Dendritic cell treated with granulocyte-macrophage colony-stimulating factor and Interleukin-4, amounts not matched to agents 40 ng/mL and 50 ng/mL, for 4 days (primary cell): ENCODE measurements at regions of chr6 and their contacts with region 1.

Region 1: DNA sequence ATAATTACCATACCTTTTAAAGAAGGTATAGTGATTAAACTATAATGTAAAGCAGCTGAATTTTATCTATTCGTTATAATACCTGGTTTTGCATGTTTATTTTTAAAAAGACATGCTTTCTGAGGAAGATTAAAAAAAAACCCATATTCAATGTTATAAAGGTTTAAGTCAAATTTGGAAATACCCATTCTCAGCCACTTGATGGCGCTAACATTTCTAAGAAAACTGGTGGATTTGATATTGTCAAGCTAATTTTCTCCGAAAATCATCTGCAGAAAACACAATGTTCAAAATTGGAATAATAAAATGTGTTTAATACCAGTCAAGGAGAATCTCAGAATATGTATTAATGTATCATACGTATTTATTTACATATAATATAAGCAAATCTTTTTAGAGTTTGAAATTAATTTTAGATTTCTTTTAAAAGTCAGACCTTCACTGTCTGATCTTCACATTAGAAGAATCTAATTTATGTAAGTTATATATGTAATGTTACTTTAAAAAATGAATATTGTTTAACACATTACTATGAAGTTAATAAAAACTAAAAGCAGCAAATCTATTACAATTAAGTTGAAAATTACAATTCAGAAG is 35.0 kb downstream of the SHPRH start:
- H3K4me3 Mint-ChIP-seq: no peak overlapping the region
- H3K27ac Mint-ChIP-seq: no peak overlapping the region
- H3K4me1 Mint-ChIP-seq: no peaks in the 10 kb centered on the region
- H3K27me3 Mint-ChIP-seq: no peaks in the 10 kb centered on the region

Region 2: DNA sequence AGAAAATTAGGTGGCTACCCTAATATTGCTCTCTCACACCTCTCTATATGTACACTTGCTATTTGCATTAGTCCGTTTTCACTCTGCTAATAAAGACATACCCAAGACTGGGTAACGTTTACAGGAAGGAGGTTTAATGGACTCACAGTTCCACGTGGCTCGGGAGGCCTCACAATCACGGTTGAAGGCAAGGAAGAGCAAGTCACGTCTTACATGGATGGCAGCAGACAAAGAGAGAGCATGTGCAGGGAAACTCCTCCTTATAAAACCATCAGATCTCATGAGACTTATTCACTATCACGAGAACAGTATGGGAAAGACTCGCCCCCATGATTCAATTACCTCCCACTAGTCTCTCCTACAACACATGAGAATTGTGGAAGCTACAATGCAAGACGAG is 247.2 kb before region 1 on chr6:
- intact Hi-C with region 1: no loop called
- H3K4me3 Mint-ChIP-seq: no peak overlapping the region
- H3K27ac Mint-ChIP-seq: no peak overlapping the region
- H3K4me1 Mint-ChIP-seq: no peaks in the 10 kb centered on the region
- H3K27me3 Mint-ChIP-seq: no peaks in the 10 kb centered on the region

Region 3: DNA sequence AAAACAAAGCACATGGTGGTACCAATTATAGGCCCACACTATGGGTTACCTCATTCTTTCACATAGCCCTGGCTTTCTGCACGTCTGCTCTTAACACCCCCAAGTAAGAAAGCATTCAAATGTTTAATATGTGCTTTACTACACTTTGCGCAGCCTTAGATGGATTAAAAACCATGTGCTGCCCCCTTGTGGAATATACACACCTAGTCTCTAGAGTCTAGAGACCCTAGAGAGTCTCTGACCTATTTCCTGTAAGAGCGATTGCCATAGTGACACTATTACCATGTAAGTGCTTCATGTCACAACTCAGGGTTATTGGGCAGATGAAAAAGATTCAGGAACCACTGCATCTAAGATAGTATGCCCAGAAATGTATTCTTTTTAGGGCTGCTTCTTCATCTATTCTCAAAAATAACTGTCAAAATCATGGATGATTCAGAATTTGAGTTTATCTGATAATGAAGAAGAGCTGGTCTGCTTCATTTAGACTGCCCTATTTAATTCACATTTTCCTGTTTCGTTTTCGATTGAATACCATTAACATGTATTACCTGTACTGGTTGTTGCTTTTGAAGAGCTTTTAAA is 856.0 kb after region 1 on chr6:
- intact Hi-C with region 1: loop called (anchors 1 kb)
- H3K4me3 Mint-ChIP-seq: no peak overlapping the region
- H3K27ac Mint-ChIP-seq: no peak overlapping the region
- H3K4me1 Mint-ChIP-seq: peaks cover 6% of the 10 kb centered on the region
- H3K27me3 Mint-ChIP-seq: no peaks in the 10 kb centered on the region